ENCODE measurements at regions of chr16 and their contacts with region 1.

Region 1: DNA sequence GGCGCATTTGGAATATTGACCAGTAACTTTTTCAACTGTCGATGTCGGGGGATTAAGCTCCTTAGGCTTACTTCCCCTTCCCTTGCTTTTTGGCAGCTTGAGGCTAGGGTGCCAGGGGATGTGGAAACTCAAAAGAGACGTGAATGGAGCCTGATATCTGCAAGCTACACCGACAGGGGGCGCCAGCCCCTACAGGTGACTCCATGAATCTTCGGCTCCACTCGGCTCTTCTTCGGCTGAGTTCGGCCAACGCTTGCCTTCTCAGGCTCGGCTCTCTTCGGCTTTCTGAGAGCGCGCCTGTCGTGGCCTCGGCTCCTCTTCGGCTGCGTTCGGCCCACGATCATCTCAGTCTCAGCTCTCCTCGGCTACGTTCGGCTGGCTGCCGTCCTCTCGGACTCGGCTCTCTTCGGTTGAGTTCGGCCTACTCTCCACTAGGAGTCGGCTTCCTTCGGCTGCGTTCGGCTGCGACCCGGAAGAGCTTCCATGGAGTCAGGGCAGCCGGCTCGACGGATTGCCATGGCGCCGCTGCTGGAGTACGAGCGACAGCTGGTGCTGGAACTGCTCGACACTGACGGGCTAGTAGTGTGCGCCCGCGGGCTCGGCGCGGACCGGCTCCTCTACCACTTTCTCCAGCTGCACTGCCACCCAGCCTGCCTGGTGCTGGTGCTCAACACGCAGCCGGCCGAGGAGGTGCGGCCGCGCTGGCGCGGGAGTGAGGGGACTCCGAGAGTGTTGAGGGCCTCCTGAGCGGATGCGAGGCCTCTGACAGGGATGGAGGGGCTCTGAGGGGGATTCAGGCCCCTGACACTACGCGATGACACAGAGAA is at the start of gene ERCC4:
- DNase-seq: peak; percentile 99
- H3K4me3 Mint-ChIP-seq: peak within 1 kb of the TSS; percentile 91
- H3K27ac Mint-ChIP-seq: peak within 1 kb of the TSS; percentile 89
- H3K4me1 Mint-ChIP-seq: peaks cover 24% of the 10 kb centered on the region
- H3K27me3 Mint-ChIP-seq: peaks cover 7% of the 10 kb centered on the region

Region 2: GRCh38 chr16:13906168-13907089 is 13.5 kb before region 1 on chr16:
- CTCF ChIA-PET with region 1: interaction called, 14 read pairs
- DNase-seq: no peak
- H3K4me3 Mint-ChIP-seq: no peak overlapping the region
- H3K27ac Mint-ChIP-seq: no peak overlapping the region
- H3K4me1 Mint-ChIP-seq: no peaks in the 10 kb centered on the region
- H3K27me3 Mint-ChIP-seq: no peaks in the 10 kb centered on the region

Region 3: GRCh38 chr16:13935408-13935807 is 15.5 kb after region 1 on chr16:
- CTCF ChIA-PET with region 1: interaction called, 14 read pairs
- DNase-seq: no peak
- H3K4me3 Mint-ChIP-seq: no peak overlapping the region
- H3K27ac Mint-ChIP-seq: no peak overlapping the region
- H3K4me1 Mint-ChIP-seq: peaks cover 8% of the 10 kb centered on the region
- H3K27me3 Mint-ChIP-seq: no peaks in the 10 kb centered on the region

Region 4: DNA sequence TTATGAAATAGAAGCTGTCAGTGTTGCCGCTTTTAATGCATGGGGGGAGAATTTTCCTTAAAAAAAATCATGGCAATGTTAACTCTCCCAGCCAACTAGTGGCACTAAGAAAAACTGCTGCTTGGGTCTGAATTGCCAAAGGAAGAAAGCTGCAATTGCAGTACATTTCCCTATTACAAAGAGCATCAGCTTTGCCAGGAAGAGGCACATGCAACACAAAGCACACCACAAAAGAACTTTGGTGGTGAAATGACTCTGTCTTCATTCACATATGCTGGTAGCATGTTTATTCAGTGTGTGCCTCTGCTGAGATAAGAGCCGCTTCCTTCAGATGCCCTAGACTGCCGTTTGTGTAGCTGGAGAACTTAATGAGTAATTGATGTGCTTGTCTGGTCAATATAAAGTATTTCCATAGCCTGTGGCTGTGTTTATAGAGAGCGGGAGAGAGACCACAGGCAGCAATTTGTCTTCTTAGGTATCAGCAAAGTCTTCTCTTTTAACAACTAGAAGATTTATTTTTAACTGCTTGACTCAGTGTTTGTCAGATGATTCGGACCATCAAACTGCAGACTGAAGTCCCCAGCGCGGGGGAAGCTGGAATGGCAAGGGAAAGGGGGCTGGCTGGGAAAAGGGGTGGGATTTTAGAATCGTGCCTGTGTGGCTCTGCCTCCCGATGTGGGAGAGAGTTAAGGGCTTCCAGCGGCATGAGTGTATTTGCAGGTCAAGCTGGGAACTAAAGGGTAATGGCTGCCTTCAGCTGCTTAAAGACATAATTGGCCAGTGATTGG is 266.3 kb after region 1 on chr16:
- CTCF ChIA-PET with region 1: interaction called, 10 read pairs
- DNase-seq: no peak
- H3K4me3 Mint-ChIP-seq: no peak overlapping the region
- H3K27ac Mint-ChIP-seq: no peak overlapping the region
- H3K4me1 Mint-ChIP-seq: peaks cover 11% of the 10 kb centered on the region
- H3K27me3 Mint-ChIP-seq: no peaks in the 10 kb centered on the region

Region 5: GRCh38 chr16:14249291-14250032 is 329.6 kb after region 1 on chr16:
- CTCF ChIA-PET with region 1: interaction called, 17 read pairs
- DNase-seq: peak; percentile 68
- H3K4me3 Mint-ChIP-seq: no peak overlapping the region
- H3K27ac Mint-ChIP-seq: no peak overlapping the region
- H3K4me1 Mint-ChIP-seq: no peaks in the 10 kb centered on the region
- H3K27me3 Mint-ChIP-seq: no peaks in the 10 kb centered on the region

Region 6: DNA sequence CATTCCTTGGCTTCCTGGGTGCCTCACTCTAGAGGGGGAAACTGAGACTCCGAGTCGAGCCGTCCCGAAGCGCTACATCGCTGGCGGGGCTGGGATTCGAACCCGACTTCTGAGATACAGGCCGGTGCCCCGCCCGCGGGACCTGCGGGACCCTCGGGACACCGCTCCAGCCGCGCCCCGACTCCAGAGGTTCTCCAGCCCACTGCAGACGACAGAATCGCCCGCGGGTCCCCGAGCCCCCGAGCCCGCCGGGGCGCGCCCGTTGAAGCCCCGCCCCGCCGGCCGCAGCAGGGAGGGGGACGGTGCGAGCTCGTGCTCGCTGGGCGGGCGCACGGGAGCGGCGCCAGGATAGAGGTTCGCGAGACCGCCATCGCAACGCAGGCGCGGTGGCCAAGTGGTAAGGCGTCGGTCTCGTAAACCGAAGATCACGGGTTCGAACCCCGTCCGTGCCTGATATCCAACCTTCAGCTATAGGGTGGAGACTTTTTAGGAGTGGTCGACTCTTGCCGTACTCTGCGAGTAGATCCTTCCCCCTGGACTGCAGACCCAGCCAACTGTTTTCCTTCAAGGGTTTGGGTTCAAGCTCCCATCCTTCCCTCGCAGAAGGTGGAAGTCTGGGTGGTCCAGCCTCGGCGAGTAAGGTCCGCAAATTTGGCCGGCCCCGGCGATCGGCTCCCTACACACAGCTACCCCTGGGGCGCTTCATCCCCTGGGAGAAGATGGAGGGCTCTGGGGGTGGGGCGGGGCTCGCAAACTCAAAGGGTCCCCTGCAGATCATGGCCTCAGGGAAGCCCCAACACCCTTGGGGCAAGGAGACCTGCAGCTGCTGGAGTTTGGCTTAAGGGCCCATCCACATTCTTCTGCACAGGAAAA is 365.9 kb after region 1 on chr16:
- CTCF ChIA-PET with region 1: interaction called, 21 read pairs
- DNase-seq: peak; percentile 94
- H3K4me3 Mint-ChIP-seq: peak overlapping the region; percentile 90
- H3K27ac Mint-ChIP-seq: peak overlapping the region; percentile 91
- H3K4me1 Mint-ChIP-seq: peaks cover 23% of the 10 kb centered on the region
- H3K27me3 Mint-ChIP-seq: peaks cover 27% of the 10 kb centered on the region

Measured in activated naive CD4-positive, alpha-beta T cell treated with anti-CD3 and anti-CD28 coated beads, Interleukin-2, amount 10 ng/mL, durations not matched to agents 7 days and 5 days (primary cell).